ENCODE measurements at regions of chrX and their contacts with region 1.

Region 1: GRCh38 chrX:12974796-12975669 is at the start of gene TMSB4X:
- DNase-seq: peak; percentile 70 to 90 (median 82)
- ATAC-seq: peak; percentile 35
- H3K4me3 ChIP-seq: peak within 1 kb of the TSS; percentile 98
- H3K4me3 Mint-ChIP-seq: peak within 1 kb of the TSS; percentile 100
- H3K27ac ChIP-seq: peak within 1 kb of the TSS; percentile 86 to 91
- H3K27ac Mint-ChIP-seq: peak within 1 kb of the TSS; percentile 95
- H3K4me1 ChIP-seq: peaks cover 29% of the 10 kb centered on the region
- H3K4me1 Mint-ChIP-seq: peaks cover 39% of the 10 kb centered on the region
- H3K27me3 ChIP-seq: no peaks in the 10 kb centered on the region
- H3K27me3 Mint-ChIP-seq: no peaks in the 10 kb centered on the region
- CTCF ChIP-seq: no peak
- total RNA-seq, gene TMSB4X: 2,621 to 2,738 TPM

Region 2: DNA sequence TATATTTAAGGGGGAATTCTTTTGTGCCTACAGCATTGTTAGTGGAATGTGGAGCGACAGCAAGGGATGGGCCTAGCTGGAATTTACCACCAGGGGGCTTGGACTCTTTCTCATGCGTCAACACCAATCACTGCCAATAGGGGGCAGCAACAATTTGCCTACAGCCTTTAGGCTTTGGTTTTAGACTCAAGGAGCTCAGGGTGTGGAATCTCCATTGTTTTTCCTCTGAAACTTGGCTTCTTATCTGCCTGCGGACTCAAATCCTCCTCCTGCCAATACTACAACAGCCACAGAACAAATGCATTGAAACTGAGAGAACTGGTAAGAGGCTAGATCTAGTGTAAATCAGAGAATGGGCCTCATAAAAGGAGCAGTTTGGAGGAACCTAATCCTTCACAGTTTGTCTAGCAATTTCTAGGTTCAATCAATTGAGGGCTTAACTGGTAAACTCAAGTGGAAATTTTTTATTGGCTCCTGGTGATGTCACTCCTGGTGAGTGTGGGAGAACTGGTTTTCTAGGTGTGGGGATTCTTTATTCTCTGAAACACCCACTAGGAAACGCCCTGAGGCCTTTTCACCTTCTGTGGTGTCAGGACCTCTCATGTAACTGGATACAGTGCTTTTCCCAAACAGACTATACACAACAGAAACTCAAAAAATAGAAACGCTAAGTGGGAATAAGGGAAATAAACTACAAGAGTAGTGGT is 28.0 kb before region 1 on chrX:
- CTCF ChIA-PET with region 1: interaction called, 181 read pairs
- POLR2A ChIA-PET with region 1: interaction called, 1,050 read pairs
- intact Hi-C with region 1: loop called (anchors 1 to 2 kb)
- DNase-seq: peak; percentile 60 to 87 (median 69)
- ATAC-seq: peak; percentile 21
- H3K4me3 ChIP-seq: no peak overlapping the region
- H3K4me3 Mint-ChIP-seq: peak overlapping the region; percentile 75
- H3K27ac ChIP-seq: peak overlapping the region; percentile 29 to 59
- H3K27ac Mint-ChIP-seq: peak overlapping the region; percentile 95
- H3K4me1 ChIP-seq: peaks cover 49% of the 10 kb centered on the region
- H3K4me1 Mint-ChIP-seq: peaks cover 58% of the 10 kb centered on the region
- H3K27me3 ChIP-seq: no peaks in the 10 kb centered on the region
- H3K27me3 Mint-ChIP-seq: no peaks in the 10 kb centered on the region
- CTCF ChIP-seq: peak; percentile 84

Region 3: GRCh38 chrX:13005661-13006473 is 30.8 kb after region 1 on chrX:
- CTCF ChIA-PET with region 1: no interaction called
- POLR2A ChIA-PET with region 1: interaction called, 502 read pairs
- intact Hi-C with region 1: loop called in 1 of 2 experiments (anchors 5 kb)
- DNase-seq: peak in 9 of 14 experiments; percentile 13 to 63 (median 26)
- ATAC-seq: peak; percentile 60
- H3K4me3 ChIP-seq: no peak overlapping the region
- H3K4me3 Mint-ChIP-seq: peak overlapping the region; percentile 86
- H3K27ac ChIP-seq: peak overlapping the region; percentile 43 to 48
- H3K27ac Mint-ChIP-seq: peak overlapping the region; percentile 96
- H3K4me1 ChIP-seq: peaks cover 60% of the 10 kb centered on the region
- H3K4me1 Mint-ChIP-seq: peaks cover 75% of the 10 kb centered on the region
- H3K27me3 ChIP-seq: no peaks in the 10 kb centered on the region
- H3K27me3 Mint-ChIP-seq: no peaks in the 10 kb centered on the region
- CTCF ChIP-seq: no peak

Region 4: GRCh38 chrX:13046141-13046855 is 71.3 kb after region 1 on chrX:
- CTCF ChIA-PET with region 1: no interaction called
- POLR2A ChIA-PET with region 1: interaction called, 214 read pairs
- intact Hi-C with region 1: no loop called
- DNase-seq: no peak
- ATAC-seq: no peak
- H3K4me3 ChIP-seq: no peak overlapping the region
- H3K4me3 Mint-ChIP-seq: no peak overlapping the region
- H3K27ac ChIP-seq: no peak overlapping the region
- H3K27ac Mint-ChIP-seq: peak overlapping the region; percentile 83
- H3K4me1 ChIP-seq: peaks cover 37% of the 10 kb centered on the region
- H3K4me1 Mint-ChIP-seq: peaks cover 63% of the 10 kb centered on the region
- H3K27me3 ChIP-seq: no peaks in the 10 kb centered on the region
- H3K27me3 Mint-ChIP-seq: no peaks in the 10 kb centered on the region
- CTCF ChIP-seq: no peak

Region 5: DNA sequence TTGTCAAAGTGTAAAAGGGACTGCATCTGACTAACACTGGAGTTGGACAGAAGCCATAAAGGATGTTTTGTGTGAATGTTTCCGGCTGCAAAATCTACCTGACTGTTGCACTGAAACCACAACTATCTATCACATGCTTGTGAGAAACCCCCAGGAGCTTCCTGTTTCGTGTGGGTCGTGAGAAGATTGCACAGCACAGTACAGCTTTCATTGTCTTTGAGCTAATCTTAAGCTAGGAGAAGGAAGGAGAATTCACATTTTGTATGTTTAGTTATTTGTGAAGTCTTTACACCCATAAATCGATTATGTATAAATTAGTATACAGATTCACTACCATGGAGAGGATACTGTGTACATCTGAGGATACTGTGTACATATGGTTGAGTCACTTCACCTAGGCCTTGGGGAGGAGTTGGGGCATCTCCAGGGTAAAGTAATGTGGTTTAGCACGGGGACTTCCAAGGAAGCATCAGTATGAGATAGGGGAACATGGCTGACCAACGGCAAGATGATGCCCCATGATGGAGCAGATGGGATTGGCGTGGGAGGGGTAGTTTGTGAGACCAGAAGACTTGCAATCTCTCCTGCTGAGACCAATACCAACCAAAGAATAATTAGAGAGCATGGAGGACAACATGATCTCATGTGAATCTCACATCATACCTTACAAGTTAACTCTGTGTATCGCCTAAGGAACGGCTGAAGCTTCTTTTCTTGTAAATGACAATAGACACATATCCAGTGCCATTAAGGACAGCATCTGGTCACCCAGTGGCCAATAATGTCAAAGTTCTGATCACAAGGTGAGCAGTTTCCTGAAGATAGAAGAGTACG is 112.5 kb after region 1 on chrX:
- CTCF ChIA-PET with region 1: interaction called, 50 read pairs
- POLR2A ChIA-PET with region 1: interaction called, 1,205 read pairs
- intact Hi-C with region 1: loop called (anchors 1 kb)
- DNase-seq: peak in 11 of 14 experiments; percentile 34 to 94 (median 61)
- ATAC-seq: peak; percentile 63
- H3K4me3 ChIP-seq: peak overlapping the region; percentile 22
- H3K4me3 Mint-ChIP-seq: peak overlapping the region; percentile 85
- H3K27ac ChIP-seq: peak overlapping the region; percentile 91 to 94
- H3K27ac Mint-ChIP-seq: peak overlapping the region; percentile 95
- H3K4me1 ChIP-seq: peaks cover 72% of the 10 kb centered on the region
- H3K4me1 Mint-ChIP-seq: peaks cover 90% of the 10 kb centered on the region
- H3K27me3 ChIP-seq: no peaks in the 10 kb centered on the region
- H3K27me3 Mint-ChIP-seq: no peaks in the 10 kb centered on the region
- CTCF ChIP-seq: no peak

Region 6: DNA sequence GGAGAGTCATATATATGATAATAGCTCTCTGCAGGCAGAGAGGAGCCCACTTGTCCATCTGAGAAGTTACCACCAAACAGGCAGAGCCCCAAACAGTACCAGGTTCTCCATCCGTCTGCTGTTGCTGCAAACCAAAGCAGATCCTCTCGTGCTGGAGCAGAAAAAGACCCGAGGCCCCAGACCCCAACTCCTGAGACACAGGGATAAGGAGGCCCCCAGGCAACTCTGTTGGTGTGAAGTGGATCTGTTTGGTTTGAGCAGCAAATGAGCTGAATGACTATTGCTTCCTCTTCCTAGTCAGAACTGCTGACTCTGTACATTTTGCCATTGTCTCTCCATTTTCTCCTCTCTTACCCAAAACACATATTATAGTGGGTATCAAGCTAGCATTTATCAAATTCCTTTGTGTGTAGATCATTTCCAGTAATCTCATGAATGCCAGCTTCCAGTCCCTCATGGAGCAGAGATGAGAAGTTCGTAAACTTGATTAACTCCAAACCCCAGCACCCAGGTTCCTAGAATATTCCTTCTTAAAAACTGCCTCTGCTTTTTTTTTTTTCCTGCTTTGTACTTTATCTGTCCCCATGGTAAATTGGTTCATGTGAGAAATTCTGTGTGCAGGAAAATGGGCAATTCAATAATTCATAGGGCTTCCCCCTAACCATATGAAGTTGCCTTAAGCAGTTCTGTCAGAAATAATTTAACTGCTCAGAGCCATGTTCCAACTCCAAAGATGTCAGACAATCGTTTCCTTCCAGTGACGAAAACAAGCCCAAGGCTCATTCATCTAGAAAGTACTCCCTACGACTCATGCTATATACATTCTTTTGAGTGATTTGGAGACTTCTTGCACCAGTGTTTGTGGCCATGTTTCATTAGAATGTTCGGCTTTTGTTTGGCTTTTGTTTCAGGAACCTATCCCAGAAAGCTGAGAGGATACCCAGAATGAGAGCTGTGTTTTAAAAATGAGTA is 443.4 kb after region 1 on chrX:
- CTCF ChIA-PET with region 1: no interaction called
- POLR2A ChIA-PET with region 1: no interaction called
- intact Hi-C with region 1: no loop called
- DNase-seq: no peak
- ATAC-seq: no peak
- H3K4me3 ChIP-seq: no peak overlapping the region
- H3K4me3 Mint-ChIP-seq: no peak overlapping the region
- H3K27ac ChIP-seq: no peak overlapping the region
- H3K27ac Mint-ChIP-seq: no peak overlapping the region
- H3K4me1 ChIP-seq: no peaks in the 10 kb centered on the region
- H3K4me1 Mint-ChIP-seq: no peaks in the 10 kb centered on the region
- H3K27me3 ChIP-seq: no peaks in the 10 kb centered on the region
- H3K27me3 Mint-ChIP-seq: no peaks in the 10 kb centered on the region
- CTCF ChIP-seq: no peak

Region 7: GRCh38 chrX:13653022-13653693 is 678.1 kb after region 1 on chrX and contains the start of gene TCEANC:
- CTCF ChIA-PET with region 1: no interaction called
- POLR2A ChIA-PET with region 1: no interaction called
- intact Hi-C with region 1: loop called in 1 of 2 experiments (anchors 10 kb)
- DNase-seq: peak; percentile 83 to 97 (median 93)
- ATAC-seq: peak; percentile 94
- H3K4me3 ChIP-seq: peak within 1 kb of the TSS; percentile 88
- H3K4me3 Mint-ChIP-seq: peak within 1 kb of the TSS; percentile 98
- H3K27ac ChIP-seq: peak within 1 kb of the TSS; percentile 90 to 93
- H3K27ac Mint-ChIP-seq: peak within 1 kb of the TSS; percentile 99
- H3K4me1 ChIP-seq: peaks cover 9% of the 10 kb centered on the region
- H3K4me1 Mint-ChIP-seq: peaks cover 18% of the 10 kb centered on the region
- H3K27me3 ChIP-seq: no peaks in the 10 kb centered on the region
- H3K27me3 Mint-ChIP-seq: no peaks in the 10 kb centered on the region
- CTCF ChIP-seq: no peak
- total RNA-seq, gene TCEANC: 6.5 to 8.3 TPM

Region 8: DNA sequence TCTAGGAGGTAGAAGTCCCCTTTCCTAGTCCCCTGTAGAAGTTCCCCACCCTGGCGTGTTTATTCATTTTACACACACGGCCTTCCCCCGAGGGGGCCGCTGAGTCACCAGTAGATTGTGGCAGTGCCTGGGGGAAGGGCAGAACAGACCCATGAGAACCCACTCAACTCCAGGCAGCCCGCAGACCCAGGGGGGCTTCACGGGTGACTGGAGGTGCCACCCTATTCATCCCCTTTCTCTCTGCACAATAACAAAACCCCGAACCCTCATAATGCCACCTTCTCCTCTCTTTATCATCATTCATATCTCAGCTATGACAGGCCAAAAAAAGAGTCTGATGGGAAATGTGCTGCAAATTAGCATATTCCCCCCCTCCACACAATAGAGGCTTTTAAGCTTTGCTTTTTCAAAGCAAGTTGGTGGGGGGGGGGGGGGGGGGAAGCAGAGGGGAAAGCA is 862.3 kb after region 1 on chrX:
- CTCF ChIA-PET with region 1: no interaction called
- POLR2A ChIA-PET with region 1: no interaction called
- intact Hi-C with region 1: no loop called
- DNase-seq: no peak
- ATAC-seq: no peak
- H3K4me3 ChIP-seq: no peak overlapping the region
- H3K4me3 Mint-ChIP-seq: no peak overlapping the region
- H3K27ac ChIP-seq: no peak overlapping the region
- H3K27ac Mint-ChIP-seq: no peak overlapping the region
- H3K4me1 ChIP-seq: no peaks in the 10 kb centered on the region
- H3K4me1 Mint-ChIP-seq: no peaks in the 10 kb centered on the region
- H3K27me3 ChIP-seq: no peaks in the 10 kb centered on the region
- H3K27me3 Mint-ChIP-seq: no peaks in the 10 kb centered on the region
- CTCF ChIP-seq: no peak

Measured in CD4-positive, alpha-beta T cell (primary cell).